Tibial artery (tissue), 4 donors: ENCODE measurements at regions of chr15 and their contacts with region 1.

Region 1: GRCh38 chr15:52735231-52736089 is 54.7 kb downstream of the ONECUT1 start:
- DNase-seq: peak in 1 of 2 donors; percentile 49
- H3K4me3 ChIP-seq: no peak overlapping the region
- H3K27ac ChIP-seq: no peak overlapping the region
- H3K4me1 ChIP-seq: no peaks in the 10 kb centered on the region
- H3K27me3 ChIP-seq: no peaks in the 10 kb centered on the region
- CTCF ChIP-seq: peak; percentile 73 to 89

Region 2: GRCh38 chr15:52256366-52256765 is 479.1 kb before region 1 on chr15:
- intact Hi-C with region 1: loop called (anchors 2 kb)
- DNase-seq: peak; percentile 74 to 79
- H3K4me3 ChIP-seq: no peak overlapping the region
- H3K27ac ChIP-seq: no peak overlapping the region
- H3K4me1 ChIP-seq: peaks cover 0 to 14% (median 3%) of the 10 kb centered on the region in 4 donors
- H3K27me3 ChIP-seq: no peaks in the 10 kb centered on the region
- CTCF ChIP-seq: peak; percentile 75 to 82